ENCODE measurements at regions of chr3 and their contacts with region 1.

Region 1: DNA sequence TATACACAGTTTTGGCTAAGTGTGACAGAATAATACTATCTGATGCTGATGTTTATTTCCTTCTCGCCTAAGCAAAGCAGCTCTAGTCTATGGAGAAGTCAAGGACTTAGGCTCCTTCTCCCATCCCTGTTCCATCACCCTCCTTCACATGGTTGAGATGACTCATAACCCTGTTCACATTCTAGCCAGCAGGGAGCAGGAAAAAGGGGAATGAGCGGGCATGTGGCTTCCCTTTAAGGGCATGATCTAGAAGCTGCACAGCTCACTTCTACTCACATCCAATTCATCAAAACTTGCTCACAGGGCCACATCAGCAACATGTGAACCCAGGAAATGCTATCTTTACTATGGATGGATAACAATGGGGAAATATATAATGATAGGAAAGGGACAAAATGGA is 40.9 kb downstream of the CBLB start:
- DNase-seq: no peak
- H3K4me3 Mint-ChIP-seq: peak overlapping the region; percentile 37
- H3K27ac Mint-ChIP-seq: peak overlapping the region; percentile 100
- H3K4me1 Mint-ChIP-seq: peaks cover 80% of the 10 kb centered on the region
- H3K27me3 Mint-ChIP-seq: no peaks in the 10 kb centered on the region

Region 2: DNA sequence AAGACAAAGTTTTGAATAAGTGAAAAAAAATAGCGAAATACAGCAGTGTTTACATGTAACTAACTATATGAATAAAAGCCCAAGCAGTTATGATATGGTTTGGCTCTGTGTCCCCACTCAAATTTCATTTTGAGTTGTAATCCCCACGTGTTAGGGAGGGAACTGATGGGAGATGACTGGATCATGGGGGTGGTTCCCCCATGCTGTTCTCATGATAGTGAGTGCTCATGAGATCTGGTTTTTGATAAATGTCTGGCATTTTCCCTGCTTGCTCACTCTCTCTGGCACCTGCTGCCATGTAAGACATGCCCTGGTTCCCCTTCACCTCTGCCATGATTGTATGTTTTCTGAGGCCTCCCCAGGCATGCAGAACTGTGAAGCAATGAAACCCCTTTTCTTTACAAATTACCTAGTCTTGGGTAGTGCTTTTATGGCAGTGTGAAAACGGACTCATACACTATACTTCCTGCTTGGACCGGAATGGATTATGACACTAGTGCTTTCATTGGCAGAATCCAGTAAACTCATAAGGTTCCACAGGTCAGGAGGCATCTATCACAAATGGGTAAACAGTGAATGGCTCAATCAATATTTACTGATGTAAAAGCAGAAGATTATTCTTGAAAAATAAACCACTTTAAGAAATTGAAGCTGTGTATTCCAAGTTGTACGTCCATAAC is 151.2 kb before region 1 on chr3:
- intact Hi-C with region 1: loop called (anchors 1 kb)
- DNase-seq: no peak
- H3K4me3 Mint-ChIP-seq: no peak overlapping the region
- H3K27ac Mint-ChIP-seq: peak overlapping the region; percentile 74
- H3K4me1 Mint-ChIP-seq: peaks cover 23% of the 10 kb centered on the region
- H3K27me3 Mint-ChIP-seq: no peaks in the 10 kb centered on the region

Region 3: DNA sequence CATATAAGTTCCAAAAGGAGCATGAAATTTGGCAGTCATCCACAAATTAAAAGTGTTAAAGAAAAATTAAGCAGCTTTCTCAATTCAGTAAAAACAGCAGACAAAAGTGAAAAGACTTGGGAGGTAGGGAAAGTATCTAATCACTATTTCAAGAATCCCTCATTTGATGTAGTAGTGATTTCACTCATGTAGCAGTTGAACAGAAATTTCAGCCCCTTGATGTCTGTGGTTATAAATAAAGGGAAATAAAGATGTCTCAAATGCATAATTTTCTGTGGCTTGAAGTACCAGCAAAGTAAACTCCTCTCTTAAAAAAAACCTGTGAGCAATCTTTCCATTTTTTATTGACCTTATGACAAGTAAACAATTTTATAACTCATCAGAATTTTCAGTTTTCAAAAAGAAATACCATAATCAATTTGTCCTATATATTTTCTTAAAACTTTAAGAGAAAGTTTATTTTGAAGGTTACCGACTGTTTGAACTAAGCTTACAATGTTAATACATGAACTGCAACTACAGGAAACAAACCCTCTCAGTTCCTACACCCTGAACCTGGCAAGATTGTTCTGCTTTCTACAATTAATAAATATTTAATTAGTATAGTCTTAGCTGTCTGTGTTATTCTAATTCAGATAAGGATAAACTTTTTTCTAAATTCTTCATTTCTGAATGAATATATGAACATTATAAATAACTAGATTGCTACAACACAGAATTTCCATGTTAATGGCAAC is 53.3 kb before region 1 on chr3:
- intact Hi-C with region 1: loop called (anchors 1 kb)
- DNase-seq: no peak
- H3K4me3 Mint-ChIP-seq: peak overlapping the region; percentile 38
- H3K27ac Mint-ChIP-seq: peak overlapping the region; percentile 81
- H3K4me1 Mint-ChIP-seq: peaks cover 65% of the 10 kb centered on the region
- H3K27me3 Mint-ChIP-seq: no peaks in the 10 kb centered on the region

Region 4: GRCh38 chr3:105868742-105869530 is 41.0 kb after region 1 on chr3 and contains the start of gene CBLB:
- intact Hi-C with region 1: loop called (anchors 1 kb)
- DNase-seq: peak; percentile 82
- H3K4me3 Mint-ChIP-seq: peak within 1 kb of the TSS; percentile 89
- H3K27ac Mint-ChIP-seq: peak within 1 kb of the TSS; percentile 93
- H3K4me1 Mint-ChIP-seq: peaks cover 26% of the 10 kb centered on the region
- H3K27me3 Mint-ChIP-seq: no peaks in the 10 kb centered on the region
- total RNA-seq, gene CBLB: 146 and 152 TPM in 2 replicates

Region 5: GRCh38 chr3:106215047-106215446 is 387.1 kb after region 1 on chr3:
- intact Hi-C with region 1: loop called (anchors 5 kb)
- DNase-seq: no peak
- H3K4me3 Mint-ChIP-seq: peak overlapping the region; percentile 19
- H3K27ac Mint-ChIP-seq: peak overlapping the region; percentile 79
- H3K4me1 Mint-ChIP-seq: peaks cover 47% of the 10 kb centered on the region
- H3K27me3 Mint-ChIP-seq: no peaks in the 10 kb centered on the region

Region 6: GRCh38 chr3:106609666-106610301 is 781.8 kb after region 1 on chr3:
- intact Hi-C with region 1: loop called (anchors 5 kb)
- DNase-seq: peak; percentile 41
- H3K4me3 Mint-ChIP-seq: no peak overlapping the region
- H3K27ac Mint-ChIP-seq: peak overlapping the region; percentile 73
- H3K4me1 Mint-ChIP-seq: peaks cover 26% of the 10 kb centered on the region
- H3K27me3 Mint-ChIP-seq: no peaks in the 10 kb centered on the region